ENCODE measurements at regions of chr14 and their contacts with region 1.

Region 1: DNA sequence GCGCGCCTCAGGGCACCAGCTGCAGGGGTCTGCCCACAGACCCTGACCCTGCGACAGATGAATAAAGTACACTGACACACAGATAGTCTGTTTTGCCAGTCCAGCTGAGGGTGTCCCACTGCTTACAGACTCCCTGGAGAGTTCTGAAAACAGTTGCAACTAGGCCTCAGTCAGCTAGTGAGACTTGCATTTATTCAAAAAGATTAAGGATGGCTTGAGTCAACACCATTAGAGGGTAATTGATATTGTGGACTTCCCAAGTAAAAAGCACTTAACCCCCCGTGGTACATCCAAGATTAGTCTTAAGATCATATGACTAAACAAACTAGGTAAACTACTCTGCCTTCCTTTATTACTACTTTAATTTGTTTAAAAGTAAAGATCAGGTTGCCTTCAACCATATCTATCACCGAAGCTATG is 11.1 kb upstream of the PSEN1 start:
- DNase-seq: no peak
- ATAC-seq: peak; percentile 19; the same call in 1 of the 3 replicates
- H3K4me3 ChIP-seq: no peak overlapping the region
- H3K27ac ChIP-seq: no peak overlapping the region
- H3K4me1 ChIP-seq: no peaks in the 10 kb centered on the region
- H3K27me3 ChIP-seq: no peaks in the 10 kb centered on the region
- CTCF ChIP-seq: no peak
- EP300 ChIP-seq: no peak
- POLR2A ChIP-seq: no peak
- RAD21 ChIP-seq: no peak

Region 2: GRCh38 chr14:73136387-73137225 is 11.4 kb after region 1 on chr14 and contains the start of gene PSEN1:
- CTCF ChIA-PET with region 1: no interaction called
- POLR2A ChIA-PET with region 1: interaction called, 14 read pairs
- in situ Hi-C with region 1: no loop called
- intact Hi-C with region 1: no loop called
- DNase-seq: peak; percentile 91 to 94 (median 92)
- ATAC-seq: peak; percentile 96
- H3K4me3 ChIP-seq: peak within 1 kb of the TSS; percentile 97
- H3K27ac ChIP-seq: peak within 1 kb of the TSS; percentile 87
- H3K4me1 ChIP-seq: peaks cover 0 to 16% of the 10 kb centered on the region in 2 experiments; a peak in 3 of 5 replicates
- H3K27me3 ChIP-seq: no peaks in the 10 kb centered on the region
- CTCF ChIP-seq: no peak
- EP300 ChIP-seq: no peak
- POLR2A ChIP-seq: peak; percentile 80
- RAD21 ChIP-seq: no peak
- polyA plus RNA-seq, gene PSEN1: 6.5 to 13.7 TPM